MCF 10A (cell line): ENCODE measurements at regions of chr9 and their contacts with region 1.

Region 1: DNA sequence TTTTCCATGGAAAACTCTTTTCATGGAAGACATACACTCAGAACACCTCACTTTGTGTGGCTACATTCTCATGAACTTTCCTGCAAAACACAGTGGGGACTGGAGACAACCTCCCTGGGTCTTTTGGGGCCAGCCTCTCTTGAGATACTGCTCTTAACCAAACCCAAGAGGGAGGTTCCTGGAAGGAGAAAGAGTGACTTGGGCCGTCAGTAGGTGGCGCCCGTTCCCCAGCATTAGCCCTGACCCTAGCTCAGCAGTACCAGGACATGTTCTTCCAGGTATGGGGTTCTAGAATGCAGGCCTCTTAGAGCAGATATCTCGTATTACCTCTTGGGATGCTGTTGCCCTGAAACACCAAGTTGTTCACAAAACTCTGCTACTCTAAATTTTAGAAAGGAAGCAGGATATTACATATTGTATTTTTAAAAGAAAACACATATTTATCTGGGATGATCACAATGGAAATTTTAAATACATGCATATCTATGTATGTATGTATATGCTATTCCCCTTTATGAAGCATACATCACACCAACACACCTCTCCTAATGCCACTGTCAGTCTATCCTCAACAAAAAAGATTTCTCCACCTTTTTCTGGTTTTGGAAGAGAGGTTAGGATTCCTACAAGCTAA is 15.8 kb upstream of the GLIS3 start:
- DNase-seq: peak; percentile 79
- H3K4me3 Mint-ChIP-seq: no peak overlapping the region
- H3K27ac Mint-ChIP-seq: no peak overlapping the region
- H3K4me1 Mint-ChIP-seq: no peaks in the 10 kb centered on the region
- H3K27me3 Mint-ChIP-seq: no peaks in the 10 kb centered on the region
- CTCF ChIP-seq: peak; percentile 81

Region 2: GRCh38 chr9:4297151-4297785 is 18.4 kb before region 1 on chr9:
- CTCF ChIA-PET with region 1: interaction called, 59 read pairs
- POLR2A ChIA-PET with region 1: no interaction called
- intact Hi-C with region 1: no loop called
- DNase-seq: peak; percentile 91
- H3K4me3 Mint-ChIP-seq: peak overlapping the region; percentile 94
- H3K27ac Mint-ChIP-seq: peak overlapping the region; percentile 97
- H3K4me1 Mint-ChIP-seq: peaks cover 37% of the 10 kb centered on the region
- H3K27me3 Mint-ChIP-seq: no peaks in the 10 kb centered on the region
- CTCF ChIP-seq: peak; percentile 39

Region 3: GRCh38 chr9:4327504-4328191 is 11.9 kb after region 1 on chr9:
- CTCF ChIA-PET with region 1: interaction called, 42 read pairs
- POLR2A ChIA-PET with region 1: no interaction called
- intact Hi-C with region 1: no loop called
- DNase-seq: peak; percentile 33
- H3K4me3 Mint-ChIP-seq: no peak overlapping the region
- H3K27ac Mint-ChIP-seq: no peak overlapping the region
- H3K4me1 Mint-ChIP-seq: no peaks in the 10 kb centered on the region
- H3K27me3 Mint-ChIP-seq: no peaks in the 10 kb centered on the region
- CTCF ChIP-seq: no peak

Region 4: DNA sequence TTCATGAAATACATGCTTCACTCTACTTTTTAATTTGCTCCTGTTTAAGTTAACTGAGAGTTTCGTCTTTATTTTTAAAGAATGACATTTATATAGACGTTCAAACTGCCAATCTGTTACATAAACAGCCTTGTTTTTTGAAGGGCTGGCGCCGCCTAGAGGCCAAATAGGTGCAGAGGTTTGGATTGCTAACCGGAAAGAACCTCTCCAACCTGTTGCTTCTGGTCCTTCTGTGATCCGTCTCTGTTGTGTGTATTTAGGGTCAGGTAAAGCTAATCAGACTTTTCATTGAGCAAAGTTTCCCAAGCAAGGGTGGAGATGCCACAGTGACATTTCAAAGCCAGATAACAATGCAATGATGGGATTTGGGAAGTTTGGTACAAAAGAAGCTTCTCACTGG is 23.7 kb after region 1 on chr9:
- CTCF ChIA-PET with region 1: interaction called, 98 read pairs
- POLR2A ChIA-PET with region 1: interaction called, 3 read pairs
- intact Hi-C with region 1: no loop called
- DNase-seq: peak; percentile 90
- H3K4me3 Mint-ChIP-seq: no peak overlapping the region
- H3K27ac Mint-ChIP-seq: no peak overlapping the region
- H3K4me1 Mint-ChIP-seq: peaks cover 10% of the 10 kb centered on the region
- H3K27me3 Mint-ChIP-seq: no peaks in the 10 kb centered on the region
- CTCF ChIP-seq: peak; percentile 92

Region 5: GRCh38 chr9:4353236-4353635 is 37.5 kb after region 1 on chr9:
- CTCF ChIA-PET with region 1: interaction called, 10 read pairs
- POLR2A ChIA-PET with region 1: no interaction called
- intact Hi-C with region 1: no loop called
- DNase-seq: peak; percentile 27
- H3K4me3 Mint-ChIP-seq: no peak overlapping the region
- H3K27ac Mint-ChIP-seq: no peak overlapping the region
- H3K4me1 Mint-ChIP-seq: no peaks in the 10 kb centered on the region
- H3K27me3 Mint-ChIP-seq: no peaks in the 10 kb centered on the region
- CTCF ChIP-seq: no peak

Region 6: DNA sequence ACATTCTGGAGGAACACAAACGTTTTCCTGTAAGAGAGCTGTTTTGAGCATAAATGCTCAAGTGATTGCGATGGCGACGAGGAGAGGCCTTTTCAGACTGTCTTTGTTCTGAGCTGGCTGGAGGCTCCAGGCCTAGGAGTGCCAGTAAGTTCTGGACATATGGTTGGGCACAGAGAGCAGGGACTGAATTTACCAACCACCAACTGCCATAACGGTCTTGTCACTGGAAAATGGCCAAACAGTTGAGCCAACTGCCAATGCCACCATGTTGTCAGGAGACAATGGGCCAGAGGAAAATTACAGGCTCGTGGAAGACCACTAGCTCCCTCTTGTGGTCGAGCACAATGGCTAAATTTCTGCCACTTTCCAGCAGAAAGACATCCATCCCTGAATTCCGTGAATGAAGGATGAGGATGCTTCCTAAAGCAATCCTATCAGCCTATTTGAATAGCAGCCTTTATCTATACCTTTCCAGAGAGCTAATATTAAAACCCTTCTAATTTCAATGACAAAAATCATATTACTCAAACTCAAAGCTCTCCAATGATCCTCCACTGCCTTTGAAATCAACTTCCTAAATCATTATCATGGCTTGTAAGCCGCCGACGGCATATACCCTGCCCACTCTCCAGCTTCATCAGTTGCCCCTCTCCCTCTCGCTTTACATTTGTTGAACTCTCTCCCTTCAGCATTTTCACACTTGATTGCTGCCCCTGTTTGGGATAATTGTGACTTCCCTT is 51.1 kb after region 1 on chr9:
- CTCF ChIA-PET with region 1: interaction called, 120 read pairs
- POLR2A ChIA-PET with region 1: interaction called, 6 read pairs
- intact Hi-C with region 1: loop called (anchors 1 kb)
- DNase-seq: peak; percentile 52
- H3K4me3 Mint-ChIP-seq: no peak overlapping the region
- H3K27ac Mint-ChIP-seq: no peak overlapping the region
- H3K4me1 Mint-ChIP-seq: no peaks in the 10 kb centered on the region
- H3K27me3 Mint-ChIP-seq: peaks cover 3% of the 10 kb centered on the region
- CTCF ChIP-seq: peak; percentile 80

Region 7: DNA sequence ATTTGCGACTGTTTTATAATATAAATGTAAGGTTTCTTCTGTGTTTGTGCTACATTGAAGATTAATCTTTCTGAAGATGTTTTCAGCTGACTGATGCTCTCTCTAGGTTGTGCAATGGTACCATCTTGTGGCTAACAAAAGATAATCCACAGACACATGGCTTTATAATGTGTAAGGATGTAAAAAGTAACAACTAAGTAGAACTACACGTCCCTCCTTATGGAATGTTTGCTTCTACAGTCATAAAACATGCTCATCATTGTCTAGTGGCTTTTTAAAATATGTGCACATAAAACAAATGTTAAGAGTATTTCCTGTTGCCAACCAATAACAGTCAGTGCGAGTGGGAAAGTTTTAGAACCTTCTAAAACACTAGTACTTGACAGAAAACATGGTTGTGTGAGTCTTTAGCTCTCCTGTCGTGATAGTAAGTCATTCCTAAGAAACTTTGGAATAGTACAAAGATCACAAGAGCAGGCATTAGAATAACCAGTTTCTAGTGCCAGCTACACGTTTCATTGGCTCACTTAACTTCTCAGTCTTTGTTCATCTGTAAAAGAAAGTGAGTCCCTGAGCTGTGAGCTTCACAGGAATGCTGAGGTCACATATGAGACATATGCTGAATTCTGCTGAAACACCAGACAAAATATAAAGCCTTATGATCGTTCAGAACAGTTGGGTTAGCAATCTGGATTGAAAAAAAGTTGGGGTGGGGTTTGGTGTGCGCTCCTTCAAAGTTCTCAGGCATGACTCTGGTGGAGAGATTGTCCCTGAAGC is 59.9 kb after region 1 on chr9:
- CTCF ChIA-PET with region 1: interaction called, 120 read pairs
- POLR2A ChIA-PET with region 1: no interaction called
- intact Hi-C with region 1: loop called (anchors 2 kb)
- DNase-seq: peak; percentile 50
- H3K4me3 Mint-ChIP-seq: no peak overlapping the region
- H3K27ac Mint-ChIP-seq: no peak overlapping the region
- H3K4me1 Mint-ChIP-seq: peaks cover 11% of the 10 kb centered on the region
- H3K27me3 Mint-ChIP-seq: peaks cover 24% of the 10 kb centered on the region
- CTCF ChIP-seq: peak; percentile 54